Activated B cell treated with CpG ODN at 0.5 μM for 24 hours (primary cell): ENCODE measurements at regions of chr1 and their contacts with region 1.

Region 1: DNA sequence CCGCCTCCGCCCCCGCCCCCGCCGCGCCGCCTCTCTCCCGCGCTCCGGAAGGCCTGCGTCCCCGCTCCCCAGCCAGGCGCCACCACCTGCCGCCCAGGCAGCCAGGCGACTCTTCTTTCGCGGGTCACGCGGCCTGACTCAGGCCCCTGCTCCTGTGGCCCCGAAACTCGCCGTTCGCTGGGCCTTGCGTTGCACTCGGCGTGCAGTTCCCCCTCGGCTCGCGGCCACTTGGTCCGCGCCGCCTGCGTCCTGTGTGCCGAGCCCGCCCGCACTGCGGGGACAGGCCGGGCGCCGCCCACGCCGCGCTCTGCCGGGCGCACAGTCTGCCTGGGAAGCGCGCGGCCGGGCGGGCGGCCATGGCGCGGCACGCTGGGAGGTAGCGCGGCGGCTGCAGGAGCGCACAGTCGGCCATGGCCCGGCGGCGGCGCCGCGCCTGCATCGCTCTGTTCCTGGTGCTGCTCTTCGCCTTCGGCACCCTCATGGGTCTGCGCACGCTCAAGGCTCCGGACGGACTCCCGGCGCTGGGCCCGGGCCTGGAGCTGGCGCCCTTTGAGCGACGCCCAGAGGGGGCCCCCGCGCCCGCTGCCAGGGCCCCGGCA is at the start of gene MANEAL:
- DNase-seq: peak; percentile 56
- ATAC-seq: peak; percentile 79
- H3K4me3 Mint-ChIP-seq: peak within 1 kb of the TSS; percentile 83
- H3K27ac Mint-ChIP-seq: no peak within 1 kb of the TSS
- H3K4me1 Mint-ChIP-seq: peaks cover 23% of the 10 kb centered on the region
- H3K27me3 Mint-ChIP-seq: peaks cover 13% of the 10 kb centered on the region
- CTCF ChIP-seq: no peak
- total RNA-seq, gene MANEAL: 5.3 and 5.4 TPM in 2 replicates

Region 2: DNA sequence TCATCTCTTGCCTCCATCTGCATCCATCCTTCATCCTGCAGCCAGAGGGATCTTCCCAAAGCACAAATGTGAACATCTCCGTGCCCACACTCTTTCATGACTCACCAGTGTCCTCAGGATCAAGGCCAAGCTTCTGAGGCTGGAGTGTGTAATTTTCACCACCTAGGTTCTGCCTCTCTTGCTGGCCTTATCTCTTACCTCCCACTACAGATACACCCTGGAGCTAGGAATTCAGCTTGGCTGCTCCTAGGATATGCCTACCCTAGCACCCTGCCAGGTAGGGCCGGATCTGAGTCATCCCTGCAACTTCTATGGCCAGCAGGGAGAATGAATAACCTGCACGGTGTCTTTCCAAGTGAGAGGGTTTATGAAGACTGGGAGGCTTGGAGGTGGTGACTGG is 1102.5 kb before region 1 on chr1:
- CTCF ChIA-PET with region 1: no interaction called
- POLR2A ChIA-PET with region 1: no interaction called
- intact Hi-C with region 1: no loop called
- DNase-seq: no peak
- ATAC-seq: no peak
- H3K4me3 Mint-ChIP-seq: no peak overlapping the region
- H3K27ac Mint-ChIP-seq: no peak overlapping the region
- H3K4me1 Mint-ChIP-seq: no peaks in the 10 kb centered on the region
- H3K27me3 Mint-ChIP-seq: peaks cover 33% of the 10 kb centered on the region
- CTCF ChIP-seq: no peak

Region 3: DNA sequence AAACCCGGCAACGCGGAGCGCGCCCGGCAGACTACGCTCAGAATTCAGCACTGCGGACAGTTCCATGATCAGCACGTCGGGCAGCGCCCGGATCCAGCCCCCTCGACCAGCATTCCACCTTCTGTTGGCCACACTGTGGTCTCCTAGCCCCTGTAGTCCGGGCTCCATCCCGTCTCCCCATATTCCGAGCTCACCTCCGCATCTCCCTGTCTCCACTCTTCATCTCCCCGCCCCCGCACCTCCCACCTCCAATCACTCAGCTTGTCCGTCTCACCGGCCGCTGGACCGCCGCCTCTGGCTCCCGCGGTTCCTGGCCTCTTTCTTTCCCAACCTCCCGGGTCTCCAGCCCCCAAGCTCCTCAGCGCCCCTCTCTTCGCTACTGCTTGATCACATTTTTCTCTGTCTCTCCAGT is 29.5 kb before region 1 on chr1:
- CTCF ChIA-PET with region 1: no interaction called
- POLR2A ChIA-PET with region 1: no interaction called
- intact Hi-C with region 1: loop called (anchors 2 kb)
- DNase-seq: no peak
- ATAC-seq: no peak
- H3K4me3 Mint-ChIP-seq: no peak overlapping the region
- H3K27ac Mint-ChIP-seq: no peak overlapping the region
- H3K4me1 Mint-ChIP-seq: peaks cover 24% of the 10 kb centered on the region
- H3K27me3 Mint-ChIP-seq: peaks cover 72% of the 10 kb centered on the region
- CTCF ChIP-seq: no peak

Region 4: DNA sequence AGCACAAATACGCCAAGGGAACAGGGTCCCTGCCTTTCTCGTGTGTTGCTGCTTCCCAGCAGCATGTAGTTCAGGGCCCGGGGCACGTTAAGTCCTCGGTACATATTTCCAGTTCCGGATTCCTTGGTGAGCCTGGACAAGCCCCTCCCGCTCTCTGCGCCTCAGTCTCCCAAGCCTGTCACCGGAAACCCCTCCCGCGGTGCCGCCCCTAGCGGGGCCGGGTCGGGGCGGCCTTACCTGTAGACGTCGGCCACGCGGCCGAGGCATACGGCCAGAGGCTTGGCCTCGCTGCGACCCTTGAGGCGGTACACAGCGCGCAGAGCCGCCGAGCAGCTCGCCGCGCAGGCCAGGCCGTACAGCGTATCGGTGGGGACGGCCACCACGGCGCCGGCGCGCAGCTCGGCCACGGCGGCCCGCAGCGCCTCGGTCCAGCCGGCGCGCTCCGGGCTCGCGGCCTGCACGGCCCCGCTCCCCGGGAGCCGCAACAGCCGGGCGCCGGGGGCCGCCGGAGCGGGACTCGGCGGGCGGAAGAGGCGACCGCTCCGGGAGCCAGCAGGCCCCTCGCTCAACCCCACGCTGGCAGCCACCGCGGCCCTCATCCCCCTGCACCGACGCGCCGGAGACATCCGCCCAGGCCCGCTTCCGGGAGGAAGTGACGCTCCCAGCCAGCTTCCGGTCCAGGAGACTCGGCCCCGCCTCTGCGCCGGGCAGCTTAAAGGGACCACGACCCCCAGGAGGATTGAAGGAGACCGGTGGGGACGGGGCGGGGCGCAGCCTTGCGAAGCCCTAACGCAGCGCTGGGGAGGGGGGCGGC is 13.9 kb after region 1 on chr1 and contains the starts of genes C1orf122 and YRDC:
- CTCF ChIA-PET with region 1: no interaction called
- POLR2A ChIA-PET with region 1: interaction called, 9 read pairs
- intact Hi-C with region 1: loop called (anchors 1 kb)
- DNase-seq: peak; percentile 93
- ATAC-seq: peak; percentile 89
- H3K4me3 Mint-ChIP-seq: peak within 1 kb of the TSS; percentile 95
- H3K27ac Mint-ChIP-seq: peak within 1 kb of the TSS; percentile 92
- H3K4me1 Mint-ChIP-seq: peaks cover 45% of the 10 kb centered on the region
- H3K27me3 Mint-ChIP-seq: no peaks in the 10 kb centered on the region
- CTCF ChIP-seq: no peak
- total RNA-seq, gene C1orf122: 18.8 and 19.9 TPM in 2 replicates
- total RNA-seq, gene YRDC: 20.6 and 24.2 TPM in 2 replicates